CD8-positive, alpha-beta T cell (primary cell): ENCODE measurements at regions of chr9 and their contacts with region 1.

Region 1: GRCh38 chr9:120184266-120184665 is 395.7 kb downstream of the CDK5RAP2 start:
- DNase-seq: no peak
- ATAC-seq: no peak
- H3K4me3 ChIP-seq: no peak overlapping the region
- H3K4me3 Mint-ChIP-seq: no peak overlapping the region
- H3K27ac ChIP-seq: no peak overlapping the region
- H3K27ac Mint-ChIP-seq: no peak overlapping the region
- H3K4me1 ChIP-seq: no peaks in the 10 kb centered on the region
- H3K4me1 Mint-ChIP-seq: no peaks in the 10 kb centered on the region
- H3K27me3 ChIP-seq: no peaks in the 10 kb centered on the region
- H3K27me3 Mint-ChIP-seq: peaks cover 2% of the 10 kb centered on the region
- CTCF ChIP-seq: no peak

Region 2: GRCh38 chr9:120117081-120117480 is 67.2 kb before region 1 on chr9:
- CTCF ChIA-PET with region 1: no interaction called
- POLR2A ChIA-PET with region 1: no interaction called
- intact Hi-C with region 1: loop called in 1 of 2 experiments (anchors 10 kb)
- DNase-seq: no peak
- ATAC-seq: no peak
- H3K4me3 ChIP-seq: no peak overlapping the region
- H3K4me3 Mint-ChIP-seq: no peak overlapping the region
- H3K27ac ChIP-seq: no peak overlapping the region
- H3K27ac Mint-ChIP-seq: no peak overlapping the region
- H3K4me1 ChIP-seq: no peaks in the 10 kb centered on the region
- H3K4me1 Mint-ChIP-seq: no peaks in the 10 kb centered on the region
- H3K27me3 ChIP-seq: no peaks in the 10 kb centered on the region
- H3K27me3 Mint-ChIP-seq: no peaks in the 10 kb centered on the region
- CTCF ChIP-seq: no peak